CD4-positive, alpha-beta memory T cell (primary cell): ENCODE measurements at regions of chr5 and their contacts with region 1.

Region 1: GRCh38 chr5:81851481-81852178 is 100.7 kb upstream of the SSBP2 start:
- DNase-seq: peak; percentile 88 to 92 (median 90)
- H3K4me3 ChIP-seq: peak overlapping the region in 1 of 2 donors; percentile 56
- H3K4me3 Mint-ChIP-seq: peak overlapping the region; percentile 94 to 99 (median 96)
- H3K27ac ChIP-seq: peak overlapping the region; percentile 64
- H3K27ac Mint-ChIP-seq: peak overlapping the region; percentile 94 to 99 (median 97)
- H3K4me1 ChIP-seq: peaks cover 31% of the 10 kb centered on the region
- H3K4me1 Mint-ChIP-seq: peaks cover 31 to 56% (median 42%) of the 10 kb centered on the region in 4 donors
- H3K27me3 ChIP-seq: no peaks in the 10 kb centered on the region
- H3K27me3 Mint-ChIP-seq: no peaks in the 10 kb centered on the region

Region 2: DNA sequence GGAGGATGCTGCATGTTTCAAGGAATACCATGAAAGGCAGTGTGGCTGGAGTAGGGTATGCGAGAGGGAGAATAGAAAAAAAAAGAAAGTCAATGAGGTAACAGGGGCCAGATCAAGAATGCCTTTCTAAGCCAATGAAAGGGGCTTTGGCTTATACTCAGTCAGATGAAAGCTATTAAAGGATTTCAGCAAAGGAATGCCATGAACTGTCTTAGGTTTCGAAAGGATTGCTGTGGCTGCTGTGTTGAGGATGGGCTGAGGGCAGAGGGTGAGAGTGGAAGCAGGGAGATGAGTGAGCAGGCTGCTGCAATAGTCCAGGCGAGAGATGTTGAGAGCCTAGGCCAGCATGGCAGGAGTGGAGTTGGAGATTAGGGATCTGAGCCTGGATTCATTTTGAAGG is 753.9 kb before region 1 on chr5:
- CTCF ChIA-PET with region 1: no interaction called
- POLR2A ChIA-PET with region 1: no interaction called
- intact Hi-C with region 1: no loop called
- DNase-seq: no peak
- H3K4me3 ChIP-seq: no peak overlapping the region
- H3K4me3 Mint-ChIP-seq: no peak overlapping the region
- H3K27ac ChIP-seq: no peak overlapping the region
- H3K27ac Mint-ChIP-seq: no peak overlapping the region
- H3K4me1 ChIP-seq: no peaks in the 10 kb centered on the region
- H3K4me1 Mint-ChIP-seq: peaks cover 0 to 1% (median under 1%) of the 10 kb centered on the region in 4 donors
- H3K27me3 ChIP-seq: no peaks in the 10 kb centered on the region
- H3K27me3 Mint-ChIP-seq: no peaks in the 10 kb centered on the region

Region 3: DNA sequence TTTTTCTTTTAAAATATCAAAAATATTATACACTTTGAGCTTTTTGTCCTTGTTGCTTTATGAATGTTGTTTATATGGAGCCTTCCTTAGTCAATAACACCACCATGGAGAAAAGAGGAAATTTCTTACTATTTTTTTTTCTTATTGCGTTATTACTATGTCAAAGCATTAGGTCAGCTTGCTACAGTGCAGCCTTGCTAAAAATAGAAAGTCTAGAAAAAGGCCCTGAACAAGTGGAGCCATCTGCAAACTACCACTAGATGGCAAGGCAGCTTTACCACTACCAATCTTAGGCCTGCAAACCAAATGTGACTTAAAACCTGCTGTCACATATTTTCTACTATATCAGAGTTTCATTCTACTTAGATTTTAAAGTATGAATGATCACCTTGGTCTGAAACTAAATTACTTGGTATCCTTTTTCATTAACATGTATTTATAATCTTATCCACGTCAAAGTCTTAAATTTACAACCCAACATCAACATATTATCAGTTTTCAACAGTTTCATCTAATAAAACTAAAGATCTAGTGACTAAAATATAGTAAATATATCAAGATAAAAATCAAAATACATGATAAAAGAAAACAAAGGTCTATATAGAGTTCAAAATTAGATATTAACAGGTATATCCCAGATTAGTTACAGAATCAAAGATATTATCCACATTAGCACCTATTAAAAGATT is 344.6 kb before region 1 on chr5:
- CTCF ChIA-PET with region 1: interaction called, 5 read pairs
- POLR2A ChIA-PET with region 1: interaction called, 5 read pairs
- intact Hi-C with region 1: loop called (anchors 5 kb)
- DNase-seq: peak; percentile 36 to 52 (median 41)
- H3K4me3 ChIP-seq: no peak overlapping the region
- H3K4me3 Mint-ChIP-seq: no peak overlapping the region
- H3K27ac ChIP-seq: no peak overlapping the region
- H3K27ac Mint-ChIP-seq: no peak overlapping the region
- H3K4me1 ChIP-seq: no peaks in the 10 kb centered on the region
- H3K4me1 Mint-ChIP-seq: peaks cover 0 to 6% (median under 1%) of the 10 kb centered on the region in 4 donors
- H3K27me3 ChIP-seq: no peaks in the 10 kb centered on the region
- H3K27me3 Mint-ChIP-seq: no peaks in the 10 kb centered on the region

Region 4: DNA sequence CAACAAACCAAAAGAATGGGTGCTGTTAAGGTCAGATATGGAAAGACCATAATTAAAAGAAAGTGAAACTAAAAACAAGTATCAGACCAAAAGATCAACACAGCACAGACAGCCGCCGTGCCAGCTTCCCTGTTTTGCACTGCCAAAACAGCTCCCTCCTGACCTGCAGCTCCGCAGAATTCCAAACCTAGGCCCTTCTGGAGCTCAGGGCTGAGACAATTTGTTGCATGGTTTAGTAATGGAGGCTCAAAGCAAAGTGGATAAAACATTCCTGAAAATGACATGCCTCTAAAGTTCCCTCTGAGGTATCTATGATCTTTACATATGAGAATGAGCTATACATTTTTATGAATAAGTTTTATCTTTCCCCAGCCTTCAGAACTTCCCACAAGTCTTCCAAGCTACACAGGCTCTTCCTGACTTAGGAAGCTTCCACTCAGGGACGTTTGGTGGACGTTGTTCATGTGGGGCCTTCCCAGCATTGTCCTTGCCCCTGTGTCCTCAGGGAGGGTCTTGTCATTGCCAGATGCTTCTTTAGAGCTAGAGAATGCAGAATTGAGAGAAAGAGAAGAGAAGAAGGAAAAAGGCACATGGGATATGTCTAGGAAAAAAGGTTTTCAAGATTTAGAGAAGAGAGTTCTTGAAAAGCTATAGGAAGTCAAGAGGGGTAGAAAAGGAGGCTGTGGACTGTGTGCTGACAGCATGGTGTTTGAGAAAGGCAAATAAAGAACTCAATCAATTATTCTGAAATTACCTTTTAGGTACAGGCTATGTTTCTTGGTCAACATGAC is 72.3 kb before region 1 on chr5:
- CTCF ChIA-PET with region 1: interaction called, 13 read pairs
- POLR2A ChIA-PET with region 1: interaction called, 37 read pairs
- intact Hi-C with region 1: loop called (anchors 1 kb)
- DNase-seq: peak; percentile 18 to 48 (median 40)
- H3K4me3 ChIP-seq: peak overlapping the region; percentile 40 to 48
- H3K4me3 Mint-ChIP-seq: peak overlapping the region; percentile 84 to 92 (median 86)
- H3K27ac ChIP-seq: peak overlapping the region; percentile 69
- H3K27ac Mint-ChIP-seq: peak overlapping the region; percentile 85 to 97 (median 94)
- H3K4me1 ChIP-seq: peaks cover 17% of the 10 kb centered on the region
- H3K4me1 Mint-ChIP-seq: peaks cover 16 to 27% (median 20%) of the 10 kb centered on the region in 4 donors
- H3K27me3 ChIP-seq: no peaks in the 10 kb centered on the region
- H3K27me3 Mint-ChIP-seq: no peaks in the 10 kb centered on the region

Region 5: DNA sequence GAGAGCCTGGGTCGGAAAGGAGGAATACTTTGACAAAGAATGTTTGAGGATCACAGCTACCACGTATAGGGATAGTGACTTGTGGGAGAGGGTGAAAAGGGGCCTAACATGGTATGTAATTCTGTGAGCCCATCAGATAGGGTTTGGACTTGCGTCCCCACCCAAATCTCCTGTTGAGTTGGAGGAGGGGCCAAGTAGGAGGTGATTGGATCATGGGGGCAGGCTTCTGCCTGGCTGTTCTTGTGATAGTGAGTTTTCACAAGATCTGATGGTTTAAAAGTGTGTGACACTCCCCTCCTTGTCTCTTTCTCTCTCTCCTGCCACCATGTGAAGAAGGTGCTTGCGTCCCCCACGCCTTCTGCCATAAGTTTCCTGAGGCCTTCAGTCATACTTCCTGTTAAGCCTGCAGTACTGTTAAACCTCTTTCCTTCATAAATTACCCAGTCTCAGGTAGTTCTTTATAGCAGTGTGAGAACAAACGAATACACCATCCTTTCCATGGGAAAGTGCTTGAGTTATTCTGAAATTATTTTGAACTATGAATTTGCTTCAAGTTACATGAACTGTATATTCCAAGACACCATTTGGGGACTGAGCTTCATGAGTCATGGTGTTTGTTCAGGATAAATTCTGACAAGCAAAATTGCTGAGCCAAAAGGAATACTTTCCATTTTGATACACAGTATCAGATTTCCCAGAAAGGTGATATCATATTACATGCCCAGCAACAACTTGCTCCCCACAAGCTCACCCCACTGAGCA is 31.9 kb before region 1 on chr5:
- CTCF ChIA-PET with region 1: no interaction called
- POLR2A ChIA-PET with region 1: interaction called, 10 read pairs
- intact Hi-C with region 1: no loop called
- DNase-seq: no peak
- H3K4me3 ChIP-seq: no peak overlapping the region
- H3K4me3 Mint-ChIP-seq: peak overlapping the region in 1 of 8 donors; percentile 5
- H3K27ac ChIP-seq: no peak overlapping the region
- H3K27ac Mint-ChIP-seq: peak overlapping the region in 6 of 7 donors; percentile 2 to 72 (median 20)
- H3K4me1 ChIP-seq: peaks cover 16% of the 10 kb centered on the region
- H3K4me1 Mint-ChIP-seq: peaks cover 19 to 51% (median 39%) of the 10 kb centered on the region in 4 donors
- H3K27me3 ChIP-seq: no peaks in the 10 kb centered on the region
- H3K27me3 Mint-ChIP-seq: peaks cover 2% of the 10 kb centered on the region in 2 donors

Region 6: DNA sequence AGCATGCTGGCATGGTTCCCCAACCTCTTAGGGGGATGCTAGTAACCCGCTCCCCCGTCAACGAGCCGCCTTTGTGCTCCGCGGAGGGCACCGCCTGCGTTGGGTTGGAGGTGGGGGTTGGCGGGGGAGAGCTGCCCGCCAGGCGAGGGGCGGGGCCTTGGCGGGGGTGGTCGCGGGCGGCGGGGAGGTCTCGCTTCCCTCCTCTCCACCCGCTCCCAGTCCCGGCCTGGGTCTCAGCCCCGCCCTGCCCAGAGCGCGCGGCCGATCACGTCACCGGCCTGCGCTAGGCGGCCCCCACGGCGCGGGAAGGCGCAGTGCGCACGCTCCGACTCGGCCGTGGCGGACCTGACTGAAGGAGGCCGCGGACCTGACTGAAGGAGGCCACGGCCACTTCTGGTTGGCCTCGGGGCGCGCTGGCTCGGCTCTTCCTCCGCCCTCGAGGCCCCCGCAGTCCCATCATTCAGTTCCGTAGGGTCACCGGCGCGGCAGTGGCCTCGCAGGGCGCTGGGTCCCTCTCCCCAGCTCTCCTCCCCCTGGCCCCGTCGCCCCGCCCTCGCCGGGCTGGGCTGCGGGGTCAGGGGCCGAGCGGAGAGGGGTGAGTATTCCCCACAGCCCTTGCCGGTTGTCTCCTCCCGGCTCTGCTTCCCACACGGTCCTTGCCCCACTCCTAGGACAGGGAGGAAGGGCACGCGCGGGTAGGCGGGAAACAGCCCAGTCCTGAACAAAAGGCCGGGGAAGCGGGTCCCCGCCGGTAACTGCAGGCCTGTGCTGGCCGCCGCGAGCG is 120.3 kb after region 1 on chr5 and contains the start of gene ATG10:
- CTCF ChIA-PET with region 1: no interaction called
- POLR2A ChIA-PET with region 1: interaction called, 38 read pairs
- intact Hi-C with region 1: loop called (anchors 1 kb)
- DNase-seq: peak; percentile 80 to 88 (median 86)
- H3K4me3 ChIP-seq: peak within 1 kb of the TSS; percentile 88 to 94
- H3K4me3 Mint-ChIP-seq: peak within 1 kb of the TSS; percentile 87 to 100 (median 98)
- H3K27ac ChIP-seq: peak within 1 kb of the TSS; percentile 93
- H3K27ac Mint-ChIP-seq: peak within 1 kb of the TSS; percentile 96 to 100 (median 99)
- H3K4me1 ChIP-seq: peaks cover 24% of the 10 kb centered on the region
- H3K4me1 Mint-ChIP-seq: peaks cover 8 to 31% (median 22%) of the 10 kb centered on the region in 4 donors
- H3K27me3 ChIP-seq: no peaks in the 10 kb centered on the region
- H3K27me3 Mint-ChIP-seq: no peaks in the 10 kb centered on the region
- total RNA-seq, gene ATG10: 7.5 to 7.9 TPM

Region 7: DNA sequence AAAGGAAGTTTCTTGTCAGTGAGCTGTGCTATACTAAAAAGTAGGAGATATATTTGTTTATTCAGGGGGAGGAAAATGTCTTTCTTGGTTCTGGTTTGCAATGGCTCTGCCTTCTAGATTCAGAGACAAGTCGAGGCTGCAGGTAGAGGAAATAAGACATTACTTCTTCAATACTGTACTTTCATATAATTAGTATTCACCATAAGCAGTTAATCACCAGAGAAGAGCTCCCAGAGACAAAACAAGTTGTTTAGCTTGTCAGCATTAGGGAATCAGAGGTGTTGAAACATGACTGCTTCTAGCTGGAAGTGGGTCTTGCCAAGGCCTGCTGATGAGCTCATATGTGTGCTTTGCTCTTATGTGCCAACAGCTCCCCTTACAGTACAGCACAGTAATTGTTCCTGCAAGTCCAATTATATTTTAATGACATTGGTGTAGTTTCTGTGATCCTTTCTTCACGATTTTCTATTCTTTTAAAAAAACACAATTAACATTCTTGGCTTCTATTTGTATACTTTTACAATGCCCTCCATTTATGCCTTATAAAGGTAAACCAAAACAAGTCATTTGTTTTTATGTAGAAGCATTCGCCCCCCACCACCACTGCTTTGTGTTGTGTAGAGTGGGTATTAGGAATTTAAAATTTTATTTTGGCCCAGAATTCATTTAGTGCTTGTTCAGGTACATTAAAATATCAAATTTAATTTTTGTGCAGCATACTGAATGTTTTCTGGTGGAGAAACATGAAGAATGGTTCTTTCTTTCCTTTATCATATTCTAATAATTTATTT is 314.3 kb after region 1 on chr5:
- CTCF ChIA-PET with region 1: interaction called, 16 read pairs
- POLR2A ChIA-PET with region 1: interaction called, 7 read pairs
- intact Hi-C with region 1: loop called (anchors 5 kb)
- DNase-seq: peak; percentile 34 to 54 (median 50)
- H3K4me3 ChIP-seq: no peak overlapping the region
- H3K4me3 Mint-ChIP-seq: no peak overlapping the region
- H3K27ac ChIP-seq: no peak overlapping the region
- H3K27ac Mint-ChIP-seq: peak overlapping the region in 2 of 7 donors; percentile 3 to 12
- H3K4me1 ChIP-seq: no peaks in the 10 kb centered on the region
- H3K4me1 Mint-ChIP-seq: peaks cover 0 to 5% (median under 1%) of the 10 kb centered on the region in 4 donors
- H3K27me3 ChIP-seq: no peaks in the 10 kb centered on the region
- H3K27me3 Mint-ChIP-seq: no peaks in the 10 kb centered on the region

Region 8: DNA sequence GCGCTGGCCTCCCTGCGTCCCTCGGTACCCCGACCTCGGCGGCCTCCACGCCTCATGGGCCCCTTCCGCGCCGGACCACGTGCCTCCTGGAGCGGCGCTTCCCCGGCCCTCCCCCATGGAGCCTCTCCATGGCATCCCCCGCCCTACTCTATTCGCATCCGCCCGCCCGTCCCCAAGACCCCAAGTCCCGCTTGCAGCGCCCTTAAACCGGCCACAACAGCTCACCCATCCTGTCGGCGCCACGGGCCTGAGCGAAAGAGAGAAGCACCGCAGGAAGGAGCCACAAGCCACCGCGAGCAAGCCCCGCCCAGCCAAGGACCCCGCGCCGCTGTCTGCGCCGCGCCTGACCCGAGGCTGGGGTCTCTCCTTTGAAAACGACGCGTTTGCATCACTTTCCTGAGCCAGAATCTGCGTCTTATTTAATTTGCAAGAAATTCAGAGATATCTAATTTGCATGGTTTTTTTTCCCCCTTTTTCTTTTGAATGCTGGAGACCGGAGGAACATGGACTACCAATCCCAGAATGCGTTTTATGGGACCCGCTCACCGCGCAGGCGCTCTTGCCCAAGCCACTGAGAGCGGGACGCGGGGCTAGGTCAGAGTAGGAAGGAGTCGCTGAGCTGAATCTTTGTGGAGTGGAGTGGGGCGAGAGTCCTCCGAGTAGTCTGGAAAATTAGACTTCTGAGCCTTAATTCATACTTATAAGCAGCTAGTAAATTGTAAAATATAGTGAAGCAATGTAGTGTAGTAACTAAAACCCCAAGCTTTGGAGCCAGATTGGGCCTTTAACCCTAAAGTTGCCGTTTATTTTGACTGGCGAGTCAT is 426.7 kb after region 1 on chr5 and contains the start of gene RPS23:
- CTCF ChIA-PET with region 1: no interaction called
- POLR2A ChIA-PET with region 1: interaction called, 12 read pairs
- intact Hi-C with region 1: loop called (anchors 1 kb)
- DNase-seq: peak; percentile 86 to 89 (median 88)
- H3K4me3 ChIP-seq: peak within 1 kb of the TSS; percentile 84 to 93
- H3K4me3 Mint-ChIP-seq: peak within 1 kb of the TSS; percentile 86 to 99 (median 96)
- H3K27ac ChIP-seq: peak within 1 kb of the TSS; percentile 79
- H3K27ac Mint-ChIP-seq: peak within 1 kb of the TSS; percentile 94 to 99 (median 98)
- H3K4me1 ChIP-seq: peaks cover 23% of the 10 kb centered on the region
- H3K4me1 Mint-ChIP-seq: peaks cover 15 to 48% (median 30%) of the 10 kb centered on the region in 4 donors
- H3K27me3 ChIP-seq: no peaks in the 10 kb centered on the region
- H3K27me3 Mint-ChIP-seq: no peaks in the 10 kb centered on the region
- total RNA-seq, gene RPS23: 2,959 to 3,147 TPM